ENCODE measurements at regions of chr6 and their contacts with region 1.

Region 1: DNA sequence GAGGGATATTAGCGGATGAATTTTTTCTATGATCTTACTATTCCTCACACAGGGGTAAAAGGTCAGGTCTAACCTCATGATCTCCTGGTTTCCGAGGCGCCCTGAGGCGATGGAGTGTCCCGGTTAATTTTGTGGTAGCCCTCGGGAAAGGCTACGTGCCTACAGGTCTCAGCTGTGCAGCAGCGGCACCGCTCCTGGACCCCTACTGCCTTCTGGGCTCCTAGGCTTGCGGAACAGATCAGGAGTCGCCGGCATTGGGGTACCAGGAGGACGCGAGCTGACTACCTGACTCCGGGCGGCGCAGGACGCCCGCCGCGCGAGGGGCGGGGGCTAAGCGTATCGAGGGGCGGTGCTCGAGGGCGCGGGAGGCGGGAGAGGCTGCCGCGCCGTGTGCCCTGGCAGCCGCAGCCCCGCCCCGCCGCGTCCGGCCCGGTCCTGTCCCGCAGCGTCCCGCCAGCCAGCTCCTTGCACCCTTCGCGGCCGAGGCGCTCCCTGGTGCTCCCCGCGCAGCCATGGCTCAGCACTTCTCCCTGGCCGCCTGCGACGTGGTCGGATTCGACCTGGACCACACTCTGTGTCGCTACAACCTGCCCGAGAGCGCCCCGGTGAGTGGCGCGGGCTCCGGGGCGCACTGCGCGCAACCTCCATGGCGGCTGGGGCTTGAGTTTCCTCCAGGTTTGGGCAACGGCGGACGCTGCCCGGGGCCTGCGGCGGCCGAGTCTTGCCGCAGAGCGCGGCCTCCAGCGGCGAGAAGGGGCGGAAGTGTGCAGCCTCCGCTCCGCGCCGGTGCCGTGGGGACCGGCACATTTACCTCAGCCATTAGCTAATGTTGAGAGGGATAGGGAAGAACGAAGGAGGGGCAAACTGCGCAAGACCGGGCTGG is at the start of gene NT5DC1:
- DNase-seq: peak; percentile 62
- ATAC-seq: peak; percentile 94
- H3K4me3 ChIP-seq: peak within 1 kb of the TSS; percentile 71 to 93
- H3K27ac ChIP-seq: peak within 1 kb of the TSS; percentile 92
- H3K4me1 ChIP-seq: peaks cover 6 to 20% of the 10 kb centered on the region in 2 experiments; a peak in 3 of 4 replicates
- H3K27me3 ChIP-seq: no peaks in the 10 kb centered on the region
- CTCF ChIP-seq: peak in 2 of 3 experiments; percentile 13 to 20; a peak in 2 of 6 replicates
- POLR2A ChIP-seq: peak; percentile 83
- RAD21 ChIP-seq: no peak
- total RNA-seq, gene NT5DC1: 63.7 TPM

Region 2: DNA sequence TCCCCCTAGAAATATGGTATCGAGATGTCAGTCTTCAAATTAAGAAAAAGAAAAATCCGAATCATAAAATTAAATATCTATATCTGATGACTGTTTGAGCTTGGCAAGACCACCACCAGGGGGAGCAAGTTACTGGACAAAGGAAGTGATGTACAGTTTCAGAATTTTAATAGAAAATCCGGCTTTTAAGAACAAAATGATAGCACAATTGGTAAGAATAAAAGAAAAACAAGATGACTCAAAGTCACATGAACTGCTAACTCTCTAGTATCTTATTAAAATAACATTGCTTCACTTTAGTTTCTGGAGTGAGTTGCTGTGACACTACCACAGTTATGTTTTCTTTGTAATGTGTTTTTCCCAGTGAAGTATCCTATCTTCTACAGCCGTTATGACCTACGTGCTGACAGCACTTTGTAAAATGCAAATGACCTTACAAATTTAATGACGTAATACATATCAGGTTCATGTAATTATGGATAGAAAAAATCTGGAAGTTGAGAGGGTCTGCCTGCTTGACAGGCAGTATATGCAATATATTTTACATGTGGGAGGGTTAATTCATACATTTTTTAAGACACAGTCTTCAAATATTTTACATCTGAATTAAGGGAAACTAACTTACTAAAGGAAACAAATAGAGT is 1352.6 kb before region 1 on chr6:
- CTCF ChIA-PET with region 1: no interaction called
- POLR2A ChIA-PET with region 1: no interaction called
- RAD21 ChIA-PET with region 1: no interaction called
- intact Hi-C with region 1: loop called (anchors 5 kb)
- DNase-seq: peak; percentile 16
- ATAC-seq: no peak
- H3K4me3 ChIP-seq: no peak overlapping the region
- H3K27ac ChIP-seq: no peak overlapping the region
- H3K4me1 ChIP-seq: no peaks in the 10 kb centered on the region
- H3K27me3 ChIP-seq: no peaks in the 10 kb centered on the region
- CTCF ChIP-seq: peak; percentile 22 to 77 (median 59); a peak in 5 of 6 replicates
- POLR2A ChIP-seq: no peak
- RAD21 ChIP-seq: peak; percentile 57

Region 3: GRCh38 chr6:115896538-115897129 is 204.0 kb before region 1 on chr6:
- CTCF ChIA-PET with region 1: interaction called, 4 read pairs
- POLR2A ChIA-PET with region 1: no interaction called
- RAD21 ChIA-PET with region 1: no interaction called
- intact Hi-C with region 1: loop called (anchors 5 kb)
- DNase-seq: peak; percentile 34
- ATAC-seq: peak; percentile 70
- H3K4me3 ChIP-seq: no peak overlapping the region
- H3K27ac ChIP-seq: no peak overlapping the region
- H3K4me1 ChIP-seq: no peaks in the 10 kb centered on the region
- H3K27me3 ChIP-seq: peaks cover 9% of the 10 kb centered on the region; the same call in 1 of the 2 replicates
- CTCF ChIP-seq: peak; percentile 51 to 84 (median 70); a peak in 5 of 6 replicates
- POLR2A ChIP-seq: no peak
- RAD21 ChIP-seq: peak; percentile 78

Region 4: DNA sequence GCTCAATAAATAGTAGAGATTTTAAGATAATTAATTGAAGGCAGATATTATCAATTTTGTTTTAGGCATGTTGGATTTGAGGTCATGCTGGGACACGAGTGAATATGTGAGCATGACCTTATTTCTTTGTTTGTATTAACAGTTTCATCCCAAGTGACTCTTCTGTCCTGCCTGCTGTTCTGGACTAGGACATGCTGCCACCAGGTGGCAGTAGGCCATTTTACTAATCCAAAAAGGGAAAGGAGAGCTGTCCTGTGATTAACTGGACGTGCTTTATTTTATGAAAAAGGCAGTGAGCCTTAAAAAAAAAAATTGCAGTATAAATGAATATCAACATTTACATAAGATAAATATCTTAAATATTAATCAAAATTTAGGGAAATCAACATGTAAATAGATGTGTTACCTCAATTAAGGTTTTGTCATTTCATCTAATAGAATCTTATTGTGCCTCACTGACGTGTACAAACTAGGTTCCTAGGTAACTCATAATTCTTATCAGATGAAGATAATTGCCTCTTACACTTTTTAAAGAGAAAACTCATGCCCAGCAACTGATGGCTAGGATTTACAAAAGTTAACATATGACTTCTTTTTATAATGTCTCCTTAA is 89.8 kb before region 1 on chr6:
- CTCF ChIA-PET with region 1: interaction called, 39 read pairs
- POLR2A ChIA-PET with region 1: interaction called, 7 read pairs
- RAD21 ChIA-PET with region 1: interaction called in 1 of 2 experiments, 9 read pairs
- intact Hi-C with region 1: loop called (anchors 1 kb)
- DNase-seq: peak; percentile 67
- ATAC-seq: peak; percentile 78
- H3K4me3 ChIP-seq: peak overlapping the region in 1 of 2 experiments; percentile 6; a peak in 1 of 4 replicates
- H3K27ac ChIP-seq: peak overlapping the region; percentile 21; the same call in 1 of the 2 replicates
- H3K4me1 ChIP-seq: peaks cover 16 to 32% of the 10 kb centered on the region in 2 experiments
- H3K27me3 ChIP-seq: no peaks in the 10 kb centered on the region
- CTCF ChIP-seq: peak; percentile 73 to 79 (median 76); a peak in 5 of 6 replicates
- POLR2A ChIP-seq: no peak
- RAD21 ChIP-seq: peak; percentile 83

Region 5: DNA sequence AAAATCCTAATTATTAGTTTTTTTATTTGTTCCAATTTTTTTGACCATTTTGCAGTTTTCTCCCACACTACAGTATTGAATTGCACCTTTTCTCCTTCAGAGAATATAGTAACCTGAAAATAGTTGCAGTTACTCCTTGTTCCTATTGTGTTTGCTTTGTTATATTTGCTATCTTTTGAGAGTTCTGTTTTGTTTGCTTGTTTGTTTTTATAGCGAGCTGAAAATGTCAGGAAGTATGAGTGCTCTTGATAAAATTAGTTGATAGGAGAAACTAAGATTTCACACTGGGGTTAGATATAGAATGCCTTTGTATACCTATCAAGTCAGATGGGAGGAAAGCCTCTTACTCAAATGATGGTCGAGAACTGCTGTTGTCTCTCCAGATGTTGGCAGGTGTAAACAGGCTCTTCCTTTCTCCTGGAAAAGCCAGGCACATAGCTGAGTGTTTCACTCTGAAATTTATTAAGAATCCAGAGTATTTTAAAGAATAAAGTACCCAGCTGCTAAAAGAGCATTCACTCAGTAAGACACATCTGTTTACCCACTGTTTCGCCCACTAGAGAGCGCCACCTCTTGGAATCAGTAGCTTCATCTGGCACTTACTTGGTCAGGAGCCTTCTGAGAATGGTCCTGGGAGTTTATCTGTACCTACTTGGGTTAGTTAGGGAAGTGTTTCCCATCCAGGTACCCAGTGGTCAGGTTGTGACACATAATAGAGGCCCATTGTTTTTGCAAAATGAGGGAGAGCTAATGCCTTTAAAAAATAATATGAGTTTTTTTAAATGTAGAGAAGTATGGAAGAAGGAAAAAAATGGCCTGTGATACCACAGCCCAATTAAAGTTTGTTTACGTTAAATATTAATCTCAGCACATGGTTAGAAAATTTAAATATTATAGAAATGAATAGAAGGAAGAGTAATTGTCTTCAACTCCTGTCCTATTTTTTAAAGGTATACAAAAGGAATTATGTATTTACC is 11.2 kb after region 1 on chr6:
- CTCF ChIA-PET with region 1: interaction called, 22 read pairs
- POLR2A ChIA-PET with region 1: interaction called, 5 read pairs
- RAD21 ChIA-PET with region 1: no interaction called
- intact Hi-C with region 1: no loop called
- DNase-seq: peak; percentile 49
- ATAC-seq: peak; percentile 96
- H3K4me3 ChIP-seq: no peak overlapping the region
- H3K27ac ChIP-seq: no peak overlapping the region
- H3K4me1 ChIP-seq: no peaks in the 10 kb centered on the region
- H3K27me3 ChIP-seq: no peaks in the 10 kb centered on the region
- CTCF ChIP-seq: peak; percentile 43 to 84 (median 83); a peak in 5 of 6 replicates
- POLR2A ChIP-seq: no peak
- RAD21 ChIP-seq: peak; percentile 55